Heart left ventricle (tissue), 16 donors: ENCODE measurements at regions of chr1 and their contacts with region 1.

Region 1: DNA sequence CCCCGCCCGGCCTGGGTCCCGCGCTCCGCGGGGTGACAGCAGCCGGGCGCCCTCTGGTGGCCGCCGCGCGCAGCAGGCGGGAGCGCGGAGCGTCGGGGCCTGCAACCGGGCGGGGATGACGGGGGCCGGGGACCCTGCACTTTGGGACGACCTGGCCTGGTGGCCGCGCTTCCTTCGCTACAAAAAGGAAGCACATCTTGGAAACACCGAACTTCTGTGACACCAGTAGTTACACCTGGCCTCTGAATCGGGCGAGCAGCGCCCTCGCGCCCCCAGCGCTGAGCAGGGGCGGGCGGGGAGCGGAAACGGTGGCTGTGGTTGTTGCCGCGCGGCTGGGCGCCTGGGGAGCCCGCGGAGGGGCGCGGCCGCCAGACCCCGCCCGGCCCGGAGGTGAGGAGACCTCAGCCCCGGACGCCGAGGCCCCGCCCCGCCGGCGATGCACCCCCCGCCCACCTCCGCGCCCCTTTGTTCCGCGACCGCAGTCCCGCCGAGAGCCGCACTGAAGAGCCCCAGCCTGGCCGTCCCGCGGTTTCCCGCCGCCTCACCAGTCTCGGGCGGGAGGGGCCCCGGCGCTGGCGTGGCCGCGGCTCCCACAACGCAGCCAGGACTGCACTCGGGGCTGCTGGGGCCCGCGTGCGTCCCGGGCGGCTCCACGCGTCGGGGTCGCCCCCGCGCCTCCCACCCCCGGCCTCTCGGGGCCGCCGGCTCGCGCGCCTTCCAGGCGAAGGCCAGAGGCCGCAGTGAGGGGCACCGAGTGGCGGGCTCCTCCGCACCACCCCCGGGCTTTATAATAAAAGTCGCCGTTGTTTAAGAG is 59.3 kb downstream of the H3-3A start:
- DNase-seq: peak; percentile 65 to 85 (median 70)
- ATAC-seq: peak; percentile 37 to 88 (median 75)
- H3K4me3 ChIP-seq: peak overlapping the region; percentile 57 to 83 (median 69)
- H3K27ac ChIP-seq: peak overlapping the region; percentile 25 to 87 (median 74)
- H3K4me1 ChIP-seq: peaks cover 0 to 17% (median 8%) of the 10 kb centered on the region in 12 donors
- H3K27me3 ChIP-seq: no peaks in the 10 kb centered on the region
- CTCF ChIP-seq: peak; percentile 61 to 97 (median 82)
- POLR2A ChIP-seq: no peak

Region 2: GRCh38 chr1:225999227-225999911 is 122.4 kb before region 1 on chr1 and contains the start of gene SDE2:
- intact Hi-C with region 1: loop called in 6 of 10 experiments (anchors 2 to 10 kb)
- DNase-seq: peak; percentile 100
- ATAC-seq: peak; percentile 96 to 98 (median 97)
- H3K4me3 ChIP-seq: peak within 1 kb of the TSS; percentile 77 to 94 (median 86)
- H3K27ac ChIP-seq: peak within 1 kb of the TSS; percentile 84 to 99 (median 96)
- H3K4me1 ChIP-seq: peaks cover 4 to 70% (median 45%) of the 10 kb centered on the region in 12 donors
- H3K27me3 ChIP-seq: no peaks in the 10 kb centered on the region
- CTCF ChIP-seq: peak in 2 of 12 donors; percentile 17 to 40
- POLR2A ChIP-seq: peak; percentile 24 to 95
- total RNA-seq, gene SDE2: 9.3 to 16.4 (median 12.6) TPM

Region 3: DNA sequence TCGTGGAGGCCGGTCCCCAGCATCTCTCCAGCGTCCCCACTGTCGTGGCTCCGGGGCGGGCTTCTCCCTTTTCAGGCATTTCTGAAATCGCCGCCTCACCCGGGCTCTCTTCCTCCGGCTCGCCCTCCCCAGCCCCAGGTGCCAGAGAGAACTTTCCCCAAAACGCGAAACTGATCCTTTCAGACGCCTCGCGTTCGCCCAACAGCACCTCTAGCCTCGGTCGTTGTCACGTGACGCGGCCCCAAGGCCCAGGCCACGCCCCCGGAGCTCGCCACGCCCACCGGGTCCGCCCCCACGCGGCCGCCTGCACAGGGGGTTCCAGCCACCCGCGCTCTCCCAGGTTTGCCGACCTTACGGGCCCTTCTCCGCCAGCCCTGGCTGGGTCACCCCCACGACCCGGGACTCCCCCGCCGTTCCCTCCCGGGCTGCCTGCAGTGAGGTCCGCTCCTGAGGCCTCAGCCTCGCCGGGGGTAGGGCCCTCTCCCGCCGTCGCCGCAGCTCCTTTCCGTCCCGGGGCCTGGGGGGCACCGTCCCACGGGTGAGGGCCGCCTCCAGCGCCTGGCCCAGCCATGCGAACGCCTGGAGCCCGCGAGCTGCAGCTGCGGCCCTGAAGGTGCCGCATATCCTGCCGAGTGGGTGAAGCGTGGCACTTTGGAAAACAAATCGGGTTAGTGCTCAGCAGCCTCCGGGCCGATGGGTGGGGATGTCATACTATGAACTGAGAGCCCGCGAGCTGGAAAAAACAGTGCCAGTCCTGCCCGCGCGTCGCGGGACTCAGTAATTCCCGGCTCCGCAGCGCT is 38.3 kb before region 1 on chr1:
- intact Hi-C with region 1: loop called in 3 of 10 experiments (anchors 5 kb)
- DNase-seq: peak; percentile 88 to 95 (median 91)
- ATAC-seq: peak; percentile 87 to 98 (median 97)
- H3K4me3 ChIP-seq: peak overlapping the region; percentile 47 to 81 (median 65)
- H3K27ac ChIP-seq: peak overlapping the region in 11 of 12 donors; percentile 9 to 79 (median 69)
- H3K4me1 ChIP-seq: peaks cover 0 to 15% (median 7%) of the 10 kb centered on the region in 12 donors
- H3K27me3 ChIP-seq: no peaks in the 10 kb centered on the region
- CTCF ChIP-seq: peak in 2 of 12 donors; percentile 11 to 35
- POLR2A ChIP-seq: peak in 1 of 2 donors; percentile 44

Region 4: GRCh38 chr1:226201029-226201593 is 79.3 kb after region 1 on chr1:
- intact Hi-C with region 1: loop called (anchors 1 to 5 kb)
- DNase-seq: no peak
- ATAC-seq: no peak
- H3K4me3 ChIP-seq: no peak overlapping the region
- H3K27ac ChIP-seq: no peak overlapping the region
- H3K4me1 ChIP-seq: peaks cover 0 to 10% (median 0%) of the 10 kb centered on the region in 12 donors
- H3K27me3 ChIP-seq: no peaks in the 10 kb centered on the region
- CTCF ChIP-seq: peak in 2 of 12 donors; percentile 10 to 18
- POLR2A ChIP-seq: no peak

Region 5: GRCh38 chr1:226233806-226234205 is 112.0 kb after region 1 on chr1:
- intact Hi-C with region 1: no loop called
- DNase-seq: no peak
- ATAC-seq: no peak
- H3K4me3 ChIP-seq: no peak overlapping the region
- H3K27ac ChIP-seq: no peak overlapping the region
- H3K4me1 ChIP-seq: no peaks in the 10 kb centered on the region
- H3K27me3 ChIP-seq: no peaks in the 10 kb centered on the region
- CTCF ChIP-seq: no peak
- POLR2A ChIP-seq: no peak

Region 6: DNA sequence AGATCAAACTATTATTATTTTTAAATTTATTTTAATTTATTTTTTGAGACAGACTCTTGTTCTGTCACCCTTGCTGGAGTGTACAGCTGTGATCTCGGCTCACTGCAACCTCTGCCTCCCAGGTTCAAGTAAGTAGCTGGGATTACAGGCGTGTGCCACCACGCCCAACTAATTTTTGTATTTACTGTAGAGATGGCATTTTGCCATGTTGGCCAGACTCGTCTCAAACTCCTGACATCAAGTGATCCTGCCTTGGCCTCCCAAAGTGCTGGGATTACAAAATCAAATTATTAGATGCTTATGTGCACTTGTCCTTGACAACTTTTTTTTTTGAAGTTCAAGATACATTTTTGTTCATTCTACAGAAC is 171.7 kb after region 1 on chr1:
- intact Hi-C with region 1: no loop called
- DNase-seq: no peak
- ATAC-seq: no peak
- H3K4me3 ChIP-seq: no peak overlapping the region
- H3K27ac ChIP-seq: no peak overlapping the region
- H3K4me1 ChIP-seq: no peaks in the 10 kb centered on the region
- H3K27me3 ChIP-seq: no peaks in the 10 kb centered on the region
- CTCF ChIP-seq: no peak
- POLR2A ChIP-seq: no peak

Region 7: GRCh38 chr1:226407497-226408284 is 285.9 kb after region 1 on chr1 and contains the start of gene PARP1:
- intact Hi-C with region 1: loop called in 1 of 10 experiments (anchors 10 kb)
- DNase-seq: peak; percentile 88 to 94 (median 93)
- ATAC-seq: peak; percentile 84 to 94 (median 90)
- H3K4me3 ChIP-seq: peak within 1 kb of the TSS; percentile 62 to 98 (median 88)
- H3K27ac ChIP-seq: peak within 1 kb of the TSS; percentile 44 to 93 (median 86)
- H3K4me1 ChIP-seq: peaks cover 7 to 46% (median 41%) of the 10 kb centered on the region in 12 donors
- H3K27me3 ChIP-seq: no peaks in the 10 kb centered on the region
- CTCF ChIP-seq: peak; percentile 35 to 98 (median 90)
- POLR2A ChIP-seq: peak; percentile 34 to 81
- total RNA-seq, gene PARP1: 98.8 to 168 (median 111) TPM